Esophagus squamous epithelium (tissue), 5 donors: ENCODE measurements at regions of chr17 and their contacts with region 1.

Region 1: DNA sequence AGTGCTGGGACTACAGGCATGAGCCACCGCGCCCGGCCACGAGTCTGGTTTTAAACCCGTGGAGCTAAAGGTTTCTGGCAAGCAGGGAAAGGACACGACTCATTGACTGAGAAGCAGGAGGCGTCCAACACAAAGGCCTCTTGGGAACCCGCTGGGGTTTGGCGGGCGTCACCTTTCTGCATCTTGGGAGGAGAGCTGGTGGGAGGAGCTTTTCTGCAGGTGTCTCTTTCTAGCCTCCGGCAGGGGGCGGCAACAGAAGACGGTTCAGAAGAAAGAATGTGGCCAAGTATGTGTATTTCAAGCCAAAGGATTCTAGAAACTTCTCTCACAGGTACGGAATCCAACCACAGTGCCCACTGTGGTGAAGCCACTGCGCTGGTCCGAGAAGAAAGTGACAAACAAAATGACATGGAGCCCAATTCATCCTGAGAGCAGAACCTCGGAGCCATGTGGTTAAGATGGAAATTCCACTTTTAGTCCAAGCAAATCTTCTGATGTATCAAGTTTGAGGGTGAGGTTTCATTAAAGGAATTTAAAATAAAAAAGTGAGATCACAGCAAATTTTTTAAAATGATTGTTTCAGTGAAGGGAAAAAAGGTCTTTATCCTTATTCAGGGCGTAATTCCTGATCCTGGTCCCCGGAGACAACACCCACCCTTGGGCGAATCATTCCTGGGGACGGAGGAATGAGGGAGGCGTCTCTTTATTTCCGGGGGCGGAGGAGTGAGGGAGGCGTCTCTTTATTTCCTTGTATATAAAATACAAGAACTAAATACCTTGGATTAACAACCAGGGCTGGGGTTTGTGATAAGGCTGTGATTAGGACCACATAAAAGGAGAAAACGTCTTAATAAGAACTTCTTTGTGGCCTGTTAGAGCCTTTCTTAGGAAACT is 97.6 kb downstream of the MRM3 start:
- DNase-seq: no peak
- H3K4me3 ChIP-seq: peak overlapping the region in 1 of 4 donors; percentile 15
- H3K27ac ChIP-seq: peak overlapping the region; percentile 66 to 88 (median 86)
- H3K4me1 ChIP-seq: peaks cover 19 to 71% (median 55%) of the 10 kb centered on the region in 3 donors
- H3K27me3 ChIP-seq: no peaks in the 10 kb centered on the region
- CTCF ChIP-seq: peak; percentile 37 to 79 (median 71)
- POLR2A ChIP-seq: no peak

Region 2: GRCh38 chr17:794876-795275 is 84.9 kb before region 1 on chr17:
- intact Hi-C with region 1: loop called (anchors 10 kb)
- DNase-seq: no peak
- H3K4me3 ChIP-seq: peak overlapping the region in 3 of 4 donors; percentile 13 to 50 (median 27)
- H3K27ac ChIP-seq: peak overlapping the region; percentile 39 to 95 (median 69)
- H3K4me1 ChIP-seq: peaks cover 7 to 56% (median 10%) of the 10 kb centered on the region in 3 donors
- H3K27me3 ChIP-seq: no peaks in the 10 kb centered on the region
- CTCF ChIP-seq: peak; percentile 68 to 94 (median 89)
- POLR2A ChIP-seq: no peak

Region 3: GRCh38 chr17:979538-980405 is 100.0 kb after region 1 on chr17 and contains the start of gene NXN:
- intact Hi-C with region 1: loop called (anchors 5 kb)
- DNase-seq: peak; percentile 18
- H3K4me3 ChIP-seq: peak within 1 kb of the TSS; percentile 63 to 94 (median 81)
- H3K27ac ChIP-seq: peak within 1 kb of the TSS; percentile 88 to 92 (median 91)
- H3K4me1 ChIP-seq: peaks cover 19 to 57% (median 24%) of the 10 kb centered on the region in 3 donors
- H3K27me3 ChIP-seq: peaks cover 0 to 6% (median 0%) of the 10 kb centered on the region in 4 donors
- CTCF ChIP-seq: peak in 2 of 6 experiments; percentile 21 to 27
- POLR2A ChIP-seq: peak in 3 of 4 donors; percentile 19 to 88 (median 43)
- total RNA-seq, gene NXN: 19.5 to 34.9 (median 28.7) TPM